HepG2 (cell line): ENCODE measurements at regions of chr7 and their contacts with region 1.

Region 1: DNA sequence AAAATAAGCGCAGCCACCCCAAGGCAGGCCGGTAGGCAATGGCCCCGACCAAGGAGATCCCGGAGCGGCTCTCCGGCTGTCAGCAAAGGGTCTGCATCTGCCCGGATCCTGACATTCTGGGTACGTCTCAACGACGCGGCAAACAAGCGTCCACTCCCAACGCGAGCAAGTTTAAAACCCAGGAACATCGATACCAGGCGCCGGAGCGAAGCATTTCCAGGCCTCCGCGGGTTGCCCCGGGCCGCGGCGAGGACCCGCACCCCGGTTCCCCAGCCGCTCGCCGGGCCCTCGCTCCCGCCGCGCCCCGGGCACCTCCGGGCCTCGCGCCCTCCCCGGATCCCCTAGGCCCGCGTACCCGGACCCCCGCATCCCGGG is 453 bp downstream of the URGCP start:
- DNase-seq: peak; percentile 14
- ATAC-seq: peak; percentile 45
- H3K4me3 ChIP-seq: peak overlapping the region; percentile 70 to 87 (median 83)
- H3K27ac ChIP-seq: peak overlapping the region; percentile 78
- H3K4me1 ChIP-seq: peaks cover 36% of the 10 kb centered on the region
- H3K27me3 ChIP-seq: no peaks in the 10 kb centered on the region
- CTCF ChIP-seq: no peak
- EP300 ChIP-seq: no peak
- POLR2A ChIP-seq: no peak
- RAD21 ChIP-seq: no peak

Region 2: GRCh38 chr7:43785420-43785819 is 120.5 kb before region 1 on chr7:
- CTCF ChIA-PET with region 1: no interaction called
- POLR2A ChIA-PET with region 1: no interaction called
- in situ Hi-C with region 1: no loop called
- intact Hi-C with region 1: no loop called
- DNase-seq: no peak
- ATAC-seq: no peak
- H3K4me3 ChIP-seq: no peak overlapping the region
- H3K27ac ChIP-seq: no peak overlapping the region
- H3K4me1 ChIP-seq: peaks cover 51% of the 10 kb centered on the region
- H3K27me3 ChIP-seq: no peaks in the 10 kb centered on the region
- CTCF ChIP-seq: no peak
- EP300 ChIP-seq: no peak
- POLR2A ChIP-seq: no peak
- RAD21 ChIP-seq: no peak

Region 3: GRCh38 chr7:43925984-43926797 is 20.2 kb after region 1 on chr7 and contains the start of gene UBE2D4:
- CTCF ChIA-PET with region 1: no interaction called
- POLR2A ChIA-PET with region 1: interaction called, 21 read pairs
- in situ Hi-C with region 1: no loop called
- intact Hi-C with region 1: loop called (anchors 1 kb)
- DNase-seq: peak; percentile 67
- ATAC-seq: peak; percentile 97
- H3K4me3 ChIP-seq: peak within 1 kb of the TSS; percentile 44 to 64 (median 64)
- H3K27ac ChIP-seq: peak within 1 kb of the TSS; percentile 84
- H3K4me1 ChIP-seq: peaks cover 26% of the 10 kb centered on the region
- H3K27me3 ChIP-seq: no peaks in the 10 kb centered on the region
- CTCF ChIP-seq: 0 out of 2 replicates have a peak, but pooled peaks have one; percentile 49
- EP300 ChIP-seq: 0 out of 4 replicates have a peak, but pooled peaks of 1 of the 2 experiments have one; percentile 24
- POLR2A ChIP-seq: peak; percentile 95 to 96
- RAD21 ChIP-seq: 0 out of 2 replicates have a peak, but pooled peaks have one; percentile 46
- total RNA-seq, gene UBE2D4: 9.9 and 11.2 TPM in 2 replicates

Region 4: GRCh38 chr7:43942997-43943704 is 37.2 kb after region 1 on chr7:
- CTCF ChIA-PET with region 1: no interaction called
- POLR2A ChIA-PET with region 1: interaction called, 5 read pairs
- in situ Hi-C with region 1: no loop called
- intact Hi-C with region 1: loop called (anchors 1 kb)
- DNase-seq: no peak
- ATAC-seq: peak; percentile 82
- H3K4me3 ChIP-seq: no peak overlapping the region
- H3K27ac ChIP-seq: no peak overlapping the region
- H3K4me1 ChIP-seq: peaks cover 13% of the 10 kb centered on the region
- H3K27me3 ChIP-seq: no peaks in the 10 kb centered on the region
- CTCF ChIP-seq: peak; percentile 52
- EP300 ChIP-seq: no peak
- POLR2A ChIP-seq: no peak
- RAD21 ChIP-seq: peak; percentile 32; the same call in 1 of the 2 replicates